ENCODE measurements at regions of chr4 and their contacts with region 1.

Region 1: GRCh38 chr4:165537028-165537648 is 158.3 kb downstream of the CPE start:
- DNase-seq: peak; percentile 37
- H3K4me3 ChIP-seq: no peak overlapping the region
- H3K27ac ChIP-seq: no peak overlapping the region
- H3K4me1 ChIP-seq: no peaks in the 10 kb centered on the region
- H3K27me3 ChIP-seq: no peaks in the 10 kb centered on the region
- CTCF ChIP-seq: peak; percentile 41 to 56

Region 2: DNA sequence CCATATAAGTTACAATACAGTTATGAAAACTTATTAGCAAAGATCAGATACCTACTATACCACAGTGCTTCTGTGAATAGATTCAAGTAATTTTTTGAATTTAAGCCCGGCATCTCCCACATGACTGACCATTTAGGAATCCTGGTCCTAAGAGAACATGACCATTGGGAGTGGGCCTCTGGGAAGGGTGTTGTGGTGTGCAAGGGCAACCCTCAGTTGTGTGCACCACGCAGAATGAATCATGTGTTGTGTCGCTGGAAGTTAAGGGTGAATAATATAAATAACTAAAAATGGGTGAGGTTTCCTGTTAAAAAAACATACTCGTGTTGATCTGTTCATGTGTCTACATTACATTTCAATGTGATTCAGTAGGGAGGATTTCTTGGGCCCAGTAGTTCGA is 142.9 kb before region 1 on chr4:
- CTCF ChIA-PET with region 1: no interaction called
- dilution Hi-C with region 1: no loop called
- in situ Hi-C with region 1: no loop called
- intact Hi-C with region 1: no loop called
- DNase-seq: peak; percentile 81
- H3K4me3 ChIP-seq: no peak overlapping the region
- H3K27ac ChIP-seq: peak overlapping the region; percentile 8
- H3K4me1 ChIP-seq: peaks cover 5% of the 10 kb centered on the region
- H3K27me3 ChIP-seq: no peaks in the 10 kb centered on the region
- CTCF ChIP-seq: no peak

Region 3: GRCh38 chr4:165493359-165493758 is 43.8 kb before region 1 on chr4:
- CTCF ChIA-PET with region 1: interaction called, 3 read pairs
- dilution Hi-C with region 1: no loop called
- in situ Hi-C with region 1: no loop called
- intact Hi-C with region 1: loop called (anchors 2 kb)
- DNase-seq: peak; percentile 49
- H3K4me3 ChIP-seq: peak overlapping the region in 1 of 3 experiments; percentile 8
- H3K27ac ChIP-seq: no peak overlapping the region
- H3K4me1 ChIP-seq: no peaks in the 10 kb centered on the region
- H3K27me3 ChIP-seq: no peaks in the 10 kb centered on the region
- CTCF ChIP-seq: peak; percentile 72 to 90

Region 4: DNA sequence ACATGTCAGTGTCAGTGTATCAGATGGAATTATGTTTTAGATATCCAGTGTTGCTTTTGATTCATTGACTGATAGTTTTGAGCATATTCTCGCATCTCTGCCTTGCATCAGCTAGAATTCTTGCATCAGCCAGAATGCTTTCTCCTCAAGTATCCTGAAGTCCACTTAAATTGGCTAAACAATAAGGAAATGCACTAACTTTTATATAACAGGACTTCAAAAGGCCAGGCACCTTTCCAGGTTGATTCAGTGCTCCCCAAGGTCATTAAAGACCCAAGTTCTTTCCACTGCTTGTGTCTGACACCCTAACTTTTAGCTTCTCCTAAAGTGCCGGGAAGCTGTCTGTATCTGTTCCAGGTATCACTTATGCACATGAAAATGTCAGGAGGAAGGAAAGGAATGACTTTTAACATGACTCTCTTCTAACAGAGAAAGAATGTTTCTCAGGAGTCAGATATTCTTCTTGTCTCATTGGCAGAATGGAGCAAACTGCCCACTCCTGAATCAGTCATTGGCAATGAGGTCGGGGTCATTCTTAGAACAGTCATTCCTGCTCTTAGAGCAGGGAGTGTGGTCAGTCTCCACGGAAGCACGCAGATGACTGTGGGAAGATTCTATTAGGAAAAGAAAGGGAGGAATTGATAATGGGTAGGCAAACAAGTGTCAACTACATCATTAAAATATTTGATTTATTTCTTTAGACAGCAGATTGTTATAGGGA is 243.0 kb after region 1 on chr4:
- CTCF ChIA-PET with region 1: no interaction called
- dilution Hi-C with region 1: no loop called
- in situ Hi-C with region 1: no loop called
- intact Hi-C with region 1: loop called (anchors 2 kb)
- DNase-seq: no peak
- H3K4me3 ChIP-seq: no peak overlapping the region
- H3K27ac ChIP-seq: no peak overlapping the region
- H3K4me1 ChIP-seq: no peaks in the 10 kb centered on the region
- H3K27me3 ChIP-seq: no peaks in the 10 kb centered on the region
- CTCF ChIP-seq: no peak

Region 5: DNA sequence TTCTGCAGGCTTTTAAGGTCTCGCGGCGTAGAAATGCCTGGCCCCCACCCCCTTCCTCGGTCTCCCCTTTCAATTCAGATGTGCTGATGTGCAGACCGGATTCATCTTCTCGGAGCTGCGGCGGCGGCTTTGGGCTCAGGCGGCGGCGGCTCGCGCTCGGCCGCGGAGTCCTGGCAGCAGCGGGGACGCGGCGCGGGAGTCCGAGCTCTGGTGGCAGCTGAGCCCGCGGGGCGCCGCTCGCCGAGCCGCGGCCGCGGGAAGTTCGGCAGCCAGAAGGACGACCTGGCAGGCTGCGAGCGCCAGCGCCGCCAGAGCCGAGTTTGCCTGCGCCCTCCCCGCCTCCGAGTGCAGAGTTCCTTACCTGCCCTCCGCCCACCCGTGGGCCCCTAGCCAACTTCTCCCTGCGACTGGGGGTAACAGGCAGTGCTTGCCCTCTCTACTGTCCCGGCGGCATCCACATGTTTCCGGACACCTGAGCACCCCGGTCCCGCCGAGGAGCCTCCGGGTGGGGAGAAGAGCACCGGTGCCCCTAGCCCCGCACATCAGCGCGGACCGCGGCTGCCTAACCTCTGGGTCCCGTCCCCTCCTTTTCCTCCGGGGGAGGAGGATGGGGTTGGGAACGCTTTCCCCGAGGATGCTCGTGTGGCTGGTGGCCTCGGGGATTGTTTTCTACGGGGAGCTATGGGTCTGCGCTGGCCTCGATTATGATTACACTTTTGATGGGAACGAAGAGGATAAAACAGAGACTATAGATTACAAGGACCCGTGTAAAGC is 336.3 kb after region 1 on chr4:
- CTCF ChIA-PET with region 1: no interaction called
- dilution Hi-C with region 1: no loop called
- in situ Hi-C with region 1: loop called in 1 of 2 experiments (anchors 25 kb)
- intact Hi-C with region 1: loop called (anchors 5 kb)
- DNase-seq: peak; percentile 56
- H3K4me3 ChIP-seq: peak overlapping the region; percentile 85 to 93 (median 92)
- H3K27ac ChIP-seq: peak overlapping the region; percentile 18
- H3K4me1 ChIP-seq: peaks cover 23% of the 10 kb centered on the region
- H3K27me3 ChIP-seq: no peaks in the 10 kb centered on the region
- CTCF ChIP-seq: no peak

Region 6: DNA sequence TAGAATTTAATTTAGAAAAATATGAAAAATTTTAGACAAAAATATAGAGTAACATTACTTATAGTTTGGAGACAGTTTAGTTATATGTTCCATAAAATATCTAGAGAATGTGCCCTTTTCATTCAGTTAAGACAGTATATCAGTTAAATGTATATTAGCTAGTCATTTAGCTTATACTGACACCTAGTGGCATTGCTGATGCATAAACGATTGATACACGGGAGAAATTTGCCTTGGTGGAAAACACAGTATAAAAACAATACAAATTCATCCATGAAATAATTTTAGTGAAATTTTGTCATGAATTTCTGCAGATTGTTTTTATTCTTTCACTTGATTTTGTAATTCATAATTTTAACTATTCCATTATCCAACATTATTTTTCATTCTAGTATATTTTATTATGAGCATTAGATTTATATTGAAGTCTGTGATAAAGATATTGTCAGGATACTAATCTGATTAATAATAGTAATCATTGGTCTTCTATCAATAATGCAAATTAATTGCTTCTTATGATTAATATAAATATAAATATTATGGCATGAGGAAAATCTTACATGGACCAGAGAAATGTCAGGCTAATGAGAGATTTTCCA is 554.9 kb after region 1 on chr4:
- CTCF ChIA-PET with region 1: no interaction called
- dilution Hi-C with region 1: loop called (anchors 25 kb)
- in situ Hi-C with region 1: loop called (anchors 5 to 10 kb)
- intact Hi-C with region 1: loop called (anchors 1 kb)
- DNase-seq: peak; percentile 17
- H3K4me3 ChIP-seq: no peak overlapping the region
- H3K27ac ChIP-seq: no peak overlapping the region
- H3K4me1 ChIP-seq: no peaks in the 10 kb centered on the region
- H3K27me3 ChIP-seq: no peaks in the 10 kb centered on the region
- CTCF ChIP-seq: peak; percentile 73 to 74

Measured in mammary epithelial cell (primary cell).